Naive thymus-derived CD4-positive, alpha-beta T cell (primary cell): ENCODE measurements at regions of chr6 and their contacts with region 1.

Region 1: DNA sequence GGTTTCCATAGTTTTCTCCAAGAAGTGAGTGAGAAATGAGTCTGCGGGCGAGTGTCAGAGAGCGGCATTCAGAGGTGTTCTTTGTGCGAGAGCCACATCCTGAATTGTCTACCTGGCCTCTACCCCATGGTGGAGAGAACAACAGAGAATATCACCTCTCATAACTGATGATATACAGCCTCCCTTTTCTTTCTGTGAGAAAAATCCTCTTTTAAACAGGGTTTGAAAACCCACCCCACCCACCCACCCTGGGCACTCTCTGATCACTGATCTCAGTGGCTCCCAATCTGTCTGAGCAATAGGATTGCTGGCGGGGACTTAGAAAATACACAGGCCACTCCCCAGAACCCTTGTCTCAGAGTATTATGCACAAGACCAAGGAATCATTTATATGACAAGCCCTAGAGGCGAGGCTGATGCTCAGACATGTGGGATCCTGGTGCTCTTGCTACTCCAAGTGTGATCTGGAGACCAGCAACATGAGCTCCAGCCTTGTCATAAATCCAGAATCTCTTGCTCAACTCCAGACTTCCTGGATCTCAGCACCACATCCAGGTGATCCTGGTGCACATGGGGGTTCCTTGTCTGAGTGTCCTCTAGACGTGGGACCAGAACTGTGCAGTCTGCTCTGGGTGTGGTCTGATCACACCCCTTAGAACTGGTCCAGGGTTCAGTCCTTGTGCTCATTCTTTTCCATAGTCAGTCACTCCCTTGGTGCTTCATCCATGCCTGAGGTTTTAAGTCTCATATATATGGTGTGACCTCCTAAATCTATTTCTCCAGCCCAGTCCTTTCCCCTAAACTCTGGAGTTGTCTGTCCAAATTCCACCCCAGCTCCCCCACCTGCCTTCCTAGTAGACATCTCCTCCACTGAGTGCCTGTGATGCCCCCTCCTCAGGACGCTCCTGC is 5.3 kb downstream of the HLA-B start:
- DNase-seq: peak in 8 of 9 donors; percentile 10 to 66 (median 50)
- ATAC-seq: peak; percentile 53
- H3K4me3 ChIP-seq: peak overlapping the region; percentile 19
- H3K4me3 Mint-ChIP-seq: peak overlapping the region; percentile 80 to 100 (median 98)
- H3K27ac ChIP-seq: no peak overlapping the region
- H3K27ac Mint-ChIP-seq: peak overlapping the region; percentile 56 to 100 (median 84)
- H3K4me1 ChIP-seq: peaks cover 32% of the 10 kb centered on the region in 2 donors
- H3K4me1 Mint-ChIP-seq: peaks cover 37 to 69% (median 60%) of the 10 kb centered on the region in 7 donors
- H3K27me3 ChIP-seq: no peaks in the 10 kb centered on the region
- H3K27me3 Mint-ChIP-seq: peaks cover 0 to 12% (median 0%) of the 10 kb centered on the region in 5 donors

Region 2: DNA sequence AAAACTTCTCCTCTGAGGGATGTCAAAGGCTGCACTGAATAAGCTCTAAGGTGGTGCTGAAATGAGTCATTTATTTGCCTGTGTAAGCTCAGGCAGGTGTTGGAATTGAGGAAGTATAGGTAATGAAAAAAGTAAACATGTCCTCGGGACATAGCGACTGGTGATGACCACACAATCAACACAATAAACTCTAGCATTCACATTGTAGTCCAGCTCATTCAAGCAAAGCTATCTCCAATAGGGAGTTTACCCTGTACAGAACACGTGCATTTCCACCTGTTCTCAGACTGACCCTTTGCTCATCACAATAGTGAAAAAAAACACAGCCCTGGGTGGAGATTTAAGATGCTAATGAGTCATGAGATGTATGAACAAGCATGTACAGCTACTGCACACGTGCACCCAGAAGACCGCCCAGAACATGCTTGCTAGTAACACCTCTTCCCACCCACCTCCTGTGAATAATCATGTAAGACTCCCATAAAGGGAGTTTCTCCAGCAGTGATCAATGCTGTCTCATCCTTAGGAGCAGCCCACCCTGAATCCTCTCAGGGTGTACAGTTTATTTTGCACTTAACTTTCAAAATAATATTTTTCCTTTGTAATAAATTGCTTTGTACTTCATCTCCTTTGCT is 148.2 kb before region 1 on chr6:
- CTCF ChIA-PET with region 1: no interaction called
- POLR2A ChIA-PET with region 1: interaction called, 75 read pairs
- intact Hi-C with region 1: no loop called
- DNase-seq: peak in 3 of 9 donors; percentile 13 to 73 (median 55)
- ATAC-seq: peak; percentile 81
- H3K4me3 ChIP-seq: peak overlapping the region; percentile 67
- H3K4me3 Mint-ChIP-seq: peak overlapping the region; percentile 74 to 96 (median 89)
- H3K27ac ChIP-seq: peak overlapping the region; percentile 73
- H3K27ac Mint-ChIP-seq: peak overlapping the region; percentile 82 to 97 (median 96)
- H3K4me1 ChIP-seq: peaks cover 29 to 41% of the 10 kb centered on the region in 2 donors
- H3K4me1 Mint-ChIP-seq: peaks cover 49 to 73% (median 64%) of the 10 kb centered on the region in 7 donors
- H3K27me3 ChIP-seq: no peaks in the 10 kb centered on the region
- H3K27me3 Mint-ChIP-seq: no peaks in the 10 kb centered on the region

Region 3: GRCh38 chr6:31332637-31333602 is 18.7 kb before region 1 on chr6:
- CTCF ChIA-PET with region 1: no interaction called
- POLR2A ChIA-PET with region 1: interaction called, 3 read pairs
- intact Hi-C with region 1: loop called in 1 of 2 experiments (anchors 2 kb)
- DNase-seq: peak in 3 of 9 donors; percentile 47 to 63 (median 51)
- ATAC-seq: peak; percentile 73
- H3K4me3 ChIP-seq: no peak overlapping the region
- H3K4me3 Mint-ChIP-seq: peak overlapping the region in 1 of 10 donors; percentile 1
- H3K27ac ChIP-seq: no peak overlapping the region
- H3K27ac Mint-ChIP-seq: peak overlapping the region in 5 of 9 donors; percentile 15 to 57 (median 30)
- H3K4me1 ChIP-seq: no peaks in the 10 kb centered on the region
- H3K4me1 Mint-ChIP-seq: peaks cover 0 to 12% (median 11%) of the 10 kb centered on the region in 7 donors
- H3K27me3 ChIP-seq: no peaks in the 10 kb centered on the region
- H3K27me3 Mint-ChIP-seq: peaks cover 0 to 4% (median 0%) of the 10 kb centered on the region in 5 donors